Dendritic cell treated with granulocyte-macrophage colony-stimulating factor and Interleukin-4, amounts not matched to agents 40 ng/mL and 50 ng/mL, for 4 days (primary cell): ENCODE measurements at regions of chr4 and their contacts with region 1.

Region 1: GRCh38 chr4:9762823-9763475 is 18.5 kb upstream of the DRD5 start:
- H3K4me3 Mint-ChIP-seq: no peak overlapping the region
- H3K27ac Mint-ChIP-seq: no peak overlapping the region
- H3K4me1 Mint-ChIP-seq: peaks cover 5% of the 10 kb centered on the region
- H3K27me3 Mint-ChIP-seq: peaks cover 24% of the 10 kb centered on the region

Region 2: GRCh38 chr4:9825049-9825448 is 62.1 kb after region 1 on chr4:
- intact Hi-C with region 1: no loop called
- H3K4me3 Mint-ChIP-seq: no peak overlapping the region
- H3K27ac Mint-ChIP-seq: no peak overlapping the region
- H3K4me1 Mint-ChIP-seq: no peaks in the 10 kb centered on the region
- H3K27me3 Mint-ChIP-seq: no peaks in the 10 kb centered on the region

Region 3: GRCh38 chr4:9898596-9899305 is 135.8 kb after region 1 on chr4:
- intact Hi-C with region 1: loop called (anchors 1 kb)
- H3K4me3 Mint-ChIP-seq: no peak overlapping the region
- H3K27ac Mint-ChIP-seq: no peak overlapping the region
- H3K4me1 Mint-ChIP-seq: peaks cover 31% of the 10 kb centered on the region
- H3K27me3 Mint-ChIP-seq: no peaks in the 10 kb centered on the region